ENCODE measurements at regions of chr10 and their contacts with region 1.

Region 1: GRCh38 chr10:118568327-118568848 is 27.1 kb downstream of the PRLHR start:
- DNase-seq: peak; percentile 56 to 58
- ATAC-seq: peak; percentile 36 to 84; a peak in 4 of 6 replicates
- H3K4me3 ChIP-seq: no peak overlapping the region
- H3K27ac ChIP-seq: peak overlapping the region; percentile 29 to 42; a peak in 2 of 6 replicates
- H3K4me1 ChIP-seq: no peaks in the 10 kb centered on the region
- CTCF ChIP-seq: peak; percentile 77
- EP300 ChIP-seq: no peak
- POLR2A ChIP-seq: no peak
- RAD21 ChIP-seq: peak; percentile 87 to 91

Region 2: GRCh38 chr10:118501171-118501570 is 67.2 kb before region 1 on chr10:
- CTCF ChIA-PET with region 1: no interaction called
- POLR2A ChIA-PET with region 1: no interaction called
- DNase-seq: no peak
- ATAC-seq: no peak
- H3K4me3 ChIP-seq: no peak overlapping the region
- H3K27ac ChIP-seq: no peak overlapping the region; a peak in 1 of 6 replicates
- H3K4me1 ChIP-seq: peaks cover 19% of the 10 kb centered on the region; the same call in 2 of the 3 replicates
- CTCF ChIP-seq: no peak
- EP300 ChIP-seq: no peak
- POLR2A ChIP-seq: no peak
- RAD21 ChIP-seq: no peak

Region 3: DNA sequence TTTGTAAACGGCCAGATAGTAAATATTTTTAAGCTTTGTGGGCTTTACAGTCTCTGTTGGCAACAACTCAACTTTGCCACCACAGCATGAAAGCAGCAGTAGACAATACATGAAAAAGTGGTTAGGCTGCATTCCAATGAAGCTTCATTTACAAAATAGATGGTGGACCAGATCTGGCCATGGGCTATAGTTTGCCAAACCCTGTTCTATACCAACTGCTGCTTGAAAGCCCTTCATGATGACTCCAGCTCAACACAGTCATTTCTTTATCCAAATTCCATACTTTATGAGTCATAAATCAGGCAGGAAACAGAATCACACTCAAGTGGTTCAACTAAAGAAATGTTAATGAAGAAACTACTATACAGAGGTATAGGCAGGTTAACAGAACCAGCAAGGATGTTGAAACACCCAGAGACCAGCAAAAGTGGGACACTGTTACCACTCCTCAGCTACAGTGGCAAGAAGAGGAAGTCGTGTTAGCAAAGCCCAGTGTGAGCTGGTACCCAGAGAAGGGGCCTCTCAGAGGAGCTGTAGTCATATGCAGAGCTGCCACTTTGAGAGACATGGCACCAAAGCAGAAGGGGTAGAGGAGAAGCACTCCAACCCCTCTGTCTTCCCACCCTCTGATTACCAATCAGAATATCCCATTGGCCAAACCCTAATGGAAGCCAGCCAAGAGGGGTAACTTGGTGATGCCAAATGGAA is 45.4 kb before region 1 on chr10:
- CTCF ChIA-PET with region 1: no interaction called
- POLR2A ChIA-PET with region 1: no interaction called
- DNase-seq: no peak
- ATAC-seq: 0 out of 6 replicates have a peak, but pooled peaks of 1 of the 2 experiments have one; percentile 25
- H3K4me3 ChIP-seq: no peak overlapping the region
- H3K27ac ChIP-seq: no peak overlapping the region
- H3K4me1 ChIP-seq: 0 out of 3 replicates have a peak, but pooled peaks cover 5% of the 10 kb centered on the region
- CTCF ChIP-seq: no peak
- EP300 ChIP-seq: no peak
- POLR2A ChIP-seq: no peak
- RAD21 ChIP-seq: no peak

Region 4: GRCh38 chr10:118584181-118584954 is 16.0 kb after region 1 on chr10:
- CTCF ChIA-PET with region 1: interaction called, 39 read pairs
- POLR2A ChIA-PET with region 1: no interaction called
- DNase-seq: peak in 1 of 2 experiments; percentile 23
- ATAC-seq: peak; percentile 73 to 80; a peak in 5 of 6 replicates
- H3K4me3 ChIP-seq: no peak overlapping the region
- H3K27ac ChIP-seq: no peak overlapping the region
- H3K4me1 ChIP-seq: peaks cover 9% of the 10 kb centered on the region; the same call in 1 of the 3 replicates
- CTCF ChIP-seq: no peak
- EP300 ChIP-seq: no peak
- POLR2A ChIP-seq: no peak
- RAD21 ChIP-seq: no peak

Region 5: GRCh38 chr10:118712930-118713634 is 144.7 kb after region 1 on chr10:
- CTCF ChIA-PET with region 1: interaction called, 14 read pairs
- POLR2A ChIA-PET with region 1: no interaction called
- DNase-seq: no peak
- ATAC-seq: peak; percentile 47 to 72; a peak in 3 of 6 replicates
- H3K4me3 ChIP-seq: no peak overlapping the region
- H3K27ac ChIP-seq: no peak overlapping the region
- H3K4me1 ChIP-seq: no peaks in the 10 kb centered on the region
- CTCF ChIP-seq: no peak
- EP300 ChIP-seq: no peak
- POLR2A ChIP-seq: no peak
- RAD21 ChIP-seq: no peak

Region 6: DNA sequence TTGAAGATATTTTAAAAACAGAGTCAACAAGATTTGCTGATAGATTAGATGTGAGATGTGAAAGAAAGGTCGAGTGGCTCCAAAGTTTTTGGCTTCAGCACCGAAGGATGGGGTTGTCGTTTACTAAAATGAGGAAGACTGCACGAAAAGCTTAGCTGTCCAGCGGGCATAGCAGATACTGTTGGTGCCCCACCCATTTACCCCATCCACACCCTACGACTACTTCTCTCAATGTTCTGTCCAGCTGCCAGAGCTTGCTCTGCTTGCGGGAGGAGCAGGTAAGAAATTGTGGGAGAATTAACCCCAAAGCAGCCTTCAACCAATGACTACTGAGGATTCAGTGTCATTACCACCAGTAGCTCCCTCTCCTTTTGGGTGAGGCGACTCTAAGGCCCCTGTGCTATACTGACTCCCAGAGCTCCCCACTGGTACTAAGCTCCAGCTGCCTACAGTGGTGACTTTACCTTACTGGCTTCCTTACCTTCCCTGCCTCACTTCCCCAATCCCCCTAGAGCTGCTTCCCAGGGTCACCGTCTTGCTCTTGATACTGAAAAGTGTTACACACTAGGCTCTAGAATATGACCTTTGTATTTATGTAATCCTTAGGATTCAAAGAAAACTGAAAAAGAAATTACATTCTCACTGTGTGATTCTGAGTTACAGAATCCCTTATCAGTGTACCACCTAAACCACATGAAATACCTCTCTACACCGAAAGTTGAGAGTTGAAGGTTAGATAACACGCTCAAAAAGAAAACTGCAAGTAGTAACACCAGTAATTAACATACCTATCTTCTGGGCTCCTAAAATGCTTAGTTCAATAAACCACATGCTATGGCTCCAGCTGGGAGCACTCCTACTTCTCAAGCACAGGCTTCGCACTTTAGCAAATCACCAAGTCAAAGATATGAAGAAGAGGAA is 164.1 kb after region 1 on chr10:
- CTCF ChIA-PET with region 1: interaction called, 17 read pairs
- POLR2A ChIA-PET with region 1: no interaction called
- DNase-seq: no peak
- ATAC-seq: no peak
- H3K4me3 ChIP-seq: no peak overlapping the region
- H3K27ac ChIP-seq: no peak overlapping the region
- H3K4me1 ChIP-seq: peaks cover 30% of the 10 kb centered on the region
- CTCF ChIP-seq: no peak
- EP300 ChIP-seq: no peak
- POLR2A ChIP-seq: no peak
- RAD21 ChIP-seq: no peak